ENCODE measurements at regions of chr21 and their contacts with region 1.

Region 1: DNA sequence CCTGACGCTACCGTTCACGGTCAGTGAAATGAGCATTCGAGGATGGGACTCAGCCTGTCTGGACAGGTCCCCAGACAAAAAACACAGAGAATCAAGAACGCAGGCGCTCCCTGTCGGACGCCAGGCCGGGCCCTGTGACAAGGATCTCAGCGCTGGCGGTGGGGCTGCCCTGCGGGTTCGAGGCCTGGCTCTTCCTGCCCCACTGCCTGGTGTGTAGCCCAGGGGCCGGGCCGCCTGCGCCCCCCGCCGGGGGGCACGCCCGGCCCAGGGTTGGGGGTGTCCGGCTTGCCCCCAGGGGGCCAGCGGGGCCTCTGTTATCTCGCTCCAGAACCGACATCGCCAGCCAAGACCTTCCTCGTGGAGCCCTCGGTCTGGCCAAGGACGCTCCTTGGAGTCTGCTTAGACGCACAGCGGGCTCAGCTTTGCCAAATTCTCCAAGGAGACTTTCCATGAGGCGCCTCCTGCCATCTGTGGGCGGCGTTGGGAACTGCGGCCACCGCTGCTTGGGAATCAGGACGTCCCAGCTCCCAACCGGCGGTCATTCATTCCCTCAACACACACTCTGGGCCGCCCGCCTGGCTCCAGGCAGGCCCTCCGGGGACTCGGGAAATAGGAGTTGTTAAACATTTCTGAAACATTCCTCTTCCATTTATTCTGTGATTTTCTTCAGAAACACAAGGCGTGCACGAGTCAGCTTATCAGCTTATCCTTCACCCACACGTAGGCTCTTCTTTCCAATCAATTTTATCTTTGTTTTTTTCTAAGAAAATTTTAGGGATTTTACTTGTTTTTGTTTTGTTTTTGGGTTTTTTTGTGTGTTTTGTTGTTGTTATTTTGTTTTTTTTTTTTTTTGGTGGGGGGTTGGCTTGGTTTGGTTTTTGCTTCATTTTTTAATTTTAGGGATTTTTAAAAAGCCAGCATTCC is 11.4 kb upstream of the RIPK4 start:
- DNase-seq: peak; percentile 92 to 97
- ATAC-seq: peak; percentile 92
- H3K4me3 ChIP-seq: no peak overlapping the region
- H3K27ac ChIP-seq: peak overlapping the region in 1 of 2 donors; percentile 72
- H3K4me1 ChIP-seq: no peaks in the 10 kb centered on the region
- H3K27me3 ChIP-seq: no peaks in the 10 kb centered on the region

Region 2: GRCh38 chr21:41269535-41269934 is 508.7 kb before region 1 on chr21:
- intact Hi-C with region 1: no loop called
- DNase-seq: no peak
- ATAC-seq: no peak
- H3K4me3 ChIP-seq: no peak overlapping the region
- H3K27ac ChIP-seq: no peak overlapping the region
- H3K4me1 ChIP-seq: peaks cover 0 to 1% of the 10 kb centered on the region in 2 donors
- H3K27me3 ChIP-seq: no peaks in the 10 kb centered on the region

Region 3: DNA sequence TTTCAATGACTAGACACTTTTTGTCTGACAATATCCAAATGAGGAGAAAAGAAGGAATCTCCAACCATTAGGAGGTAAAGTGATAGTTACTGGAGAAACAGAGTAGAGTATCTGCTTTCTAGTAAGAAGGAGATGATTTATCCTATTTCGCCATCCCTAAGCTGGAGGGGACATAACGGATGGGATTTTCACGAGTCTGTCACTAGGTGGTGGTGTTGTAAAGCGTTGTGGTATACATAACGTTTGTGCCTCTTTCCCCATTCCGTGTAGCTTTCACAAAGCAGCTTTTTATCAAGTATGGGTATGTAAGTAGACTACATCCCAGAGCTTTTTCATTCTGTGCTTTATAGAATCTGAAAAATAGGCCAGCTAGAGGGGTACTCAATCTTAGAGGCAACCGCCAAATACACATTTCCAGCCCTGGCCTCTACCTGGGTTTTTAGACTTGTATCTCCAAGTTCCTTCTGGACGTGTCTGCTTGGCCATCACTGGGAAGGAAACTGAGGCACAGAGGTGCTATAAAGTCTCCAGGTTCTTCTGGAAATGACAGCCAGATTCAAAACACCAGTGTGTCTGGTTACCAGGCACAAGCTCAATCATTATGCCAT is 494.9 kb before region 1 on chr21:
- intact Hi-C with region 1: loop called in 1 of 2 experiments (anchors 5 kb)
- DNase-seq: no peak
- ATAC-seq: peak; percentile 90
- H3K4me3 ChIP-seq: no peak overlapping the region
- H3K27ac ChIP-seq: no peak overlapping the region
- H3K4me1 ChIP-seq: no peaks in the 10 kb centered on the region
- H3K27me3 ChIP-seq: no peaks in the 10 kb centered on the region

Region 4: DNA sequence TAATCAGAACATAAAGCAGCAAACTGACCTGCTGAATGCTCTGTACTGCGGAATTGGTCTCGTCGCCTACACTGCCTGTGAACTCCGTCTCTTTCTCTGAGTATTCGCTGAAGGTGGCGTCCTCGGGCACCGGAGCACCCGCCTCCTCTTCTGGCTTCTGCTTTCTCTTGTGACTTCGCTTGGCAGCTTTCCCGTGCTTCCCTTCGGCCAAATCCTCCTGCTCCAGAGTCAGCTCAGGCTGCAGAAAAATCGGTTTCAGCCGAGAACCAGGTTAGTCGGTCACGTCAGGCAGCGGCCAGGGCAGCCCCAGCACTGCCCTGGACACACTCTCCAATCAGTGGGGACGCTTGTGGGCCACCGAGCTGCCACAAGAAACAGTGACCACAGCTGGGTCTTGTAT is 24.5 kb after region 1 on chr21:
- intact Hi-C with region 1: no loop called
- DNase-seq: peak; percentile 85 to 88
- ATAC-seq: peak; percentile 58
- H3K4me3 ChIP-seq: no peak overlapping the region
- H3K27ac ChIP-seq: no peak overlapping the region
- H3K4me1 ChIP-seq: no peaks in the 10 kb centered on the region
- H3K27me3 ChIP-seq: no peaks in the 10 kb centered on the region

Region 5: GRCh38 chr21:41816220-41817165 is 38.3 kb after region 1 on chr21:
- intact Hi-C with region 1: loop called in 1 of 2 experiments (anchors 5 kb)
- DNase-seq: peak; percentile 74 to 85
- ATAC-seq: peak; percentile 85
- H3K4me3 ChIP-seq: no peak overlapping the region
- H3K27ac ChIP-seq: no peak overlapping the region
- H3K4me1 ChIP-seq: no peaks in the 10 kb centered on the region
- H3K27me3 ChIP-seq: no peaks in the 10 kb centered on the region